Cardiac septum (tissue), 1 donor: ENCODE measurements at regions of chr20 and their contacts with region 1.

Region 1: GRCh38 chr20:7155282-7155681 is 387.8 kb downstream of the BMP2 start:
- DNase-seq: no peak

Region 2: DNA sequence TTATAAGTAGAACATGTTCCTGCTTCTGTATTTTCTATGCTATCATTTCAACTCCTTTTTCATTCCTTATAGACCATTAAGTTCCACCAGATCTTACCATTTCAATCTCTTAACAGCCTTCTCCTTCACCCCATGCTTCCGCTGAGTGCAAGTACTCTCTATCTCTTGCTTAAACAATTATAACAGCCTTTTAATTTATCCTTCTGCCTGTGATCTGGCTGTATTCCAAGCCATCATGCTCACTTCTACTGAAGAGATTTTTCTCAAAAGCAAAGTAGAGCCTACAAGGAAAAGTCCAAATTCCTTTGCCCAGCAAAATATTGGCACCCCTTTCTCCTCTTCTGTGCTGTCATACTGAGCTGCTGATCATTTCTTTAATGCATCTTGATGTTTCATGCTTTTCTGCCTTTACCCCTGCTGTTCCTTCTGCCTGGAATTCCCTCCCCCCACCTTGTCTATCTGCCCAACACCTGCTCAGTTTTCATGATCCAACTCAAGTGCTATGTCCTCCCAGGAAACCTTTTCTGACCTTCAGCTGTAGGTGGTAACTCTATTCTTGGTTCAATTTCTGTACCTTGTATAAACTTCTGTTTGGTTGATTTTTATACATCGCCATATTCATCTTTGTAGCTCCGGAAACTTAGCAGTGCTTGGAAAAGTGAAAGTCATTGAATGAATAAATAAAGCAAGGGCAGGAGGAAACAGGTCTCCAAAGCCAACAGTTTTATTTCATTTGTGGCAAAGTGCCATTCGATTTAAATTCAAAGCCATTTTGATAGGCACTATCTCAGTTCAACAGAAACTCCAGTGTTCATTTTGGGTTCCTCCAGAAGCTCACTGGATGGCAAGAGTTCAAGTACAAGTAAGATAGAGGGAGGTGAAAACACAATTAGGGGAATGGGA is 398.3 kb before region 1 on chr20:
- intact Hi-C with region 1: no loop called
- DNase-seq: no peak

Region 3: GRCh38 chr20:7085449-7085848 is 69.8 kb before region 1 on chr20:
- intact Hi-C with region 1: no loop called
- DNase-seq: no peak

Region 4: GRCh38 chr20:7113577-7114466 is 41.5 kb before region 1 on chr20:
- intact Hi-C with region 1: loop called (anchors 5 kb)
- DNase-seq: no peak